ENCODE measurements at regions of chr9 and their contacts with region 1.

Region 1: GRCh38 chr9:89428901-89429890 is 68.7 kb downstream of the SEMA4D start:
- DNase-seq: peak; percentile 65
- H3K4me3 Mint-ChIP-seq: no peak overlapping the region
- H3K27ac Mint-ChIP-seq: peak overlapping the region; percentile 83
- H3K4me1 Mint-ChIP-seq: peaks cover 89% of the 10 kb centered on the region
- H3K27me3 Mint-ChIP-seq: no peaks in the 10 kb centered on the region

Region 2: GRCh38 chr9:89410641-89411350 is 18.4 kb before region 1 on chr9:
- CTCF ChIA-PET with region 1: interaction called, 31 read pairs
- POLR2A ChIA-PET with region 1: no interaction called
- DNase-seq: no peak
- H3K4me3 Mint-ChIP-seq: peak overlapping the region; percentile 55
- H3K27ac Mint-ChIP-seq: peak overlapping the region; percentile 87
- H3K4me1 Mint-ChIP-seq: peaks cover 91% of the 10 kb centered on the region
- H3K27me3 Mint-ChIP-seq: no peaks in the 10 kb centered on the region

Region 3: DNA sequence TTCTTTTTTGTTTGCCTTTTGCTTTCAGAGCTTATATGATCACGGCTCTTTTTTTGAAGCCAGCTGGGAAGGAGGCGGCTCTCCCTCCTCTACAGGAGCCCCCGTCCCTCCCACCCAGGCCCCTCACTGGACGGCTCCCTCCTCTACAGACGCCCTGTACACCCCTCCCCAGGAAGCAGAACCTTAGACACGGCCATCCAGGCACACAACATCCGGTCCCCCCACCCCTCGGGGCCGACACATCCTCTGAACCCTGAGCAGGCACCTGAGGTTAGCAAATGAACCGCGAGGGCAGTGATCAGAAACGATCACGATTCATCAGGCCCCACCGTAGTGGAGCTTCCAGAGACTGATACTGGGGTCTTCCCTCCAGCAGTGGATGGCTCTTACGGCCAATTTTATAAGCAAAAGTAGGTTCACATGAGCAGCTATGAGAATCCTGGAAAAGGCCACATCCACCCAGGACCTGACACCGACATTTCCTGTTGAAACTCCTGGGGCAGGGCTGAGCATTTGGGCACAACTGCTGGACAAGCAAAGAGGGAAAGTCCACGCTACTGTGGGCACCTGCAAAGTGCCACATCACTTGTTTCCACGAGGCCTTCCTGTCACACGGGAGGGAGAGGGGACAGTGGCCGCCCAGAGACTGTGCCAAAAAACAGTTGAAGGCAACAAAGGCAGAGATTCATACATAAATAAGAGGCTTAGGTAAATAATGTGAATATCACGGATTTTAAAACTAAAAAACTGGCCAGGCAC is 10.1 kb before region 1 on chr9:
- CTCF ChIA-PET with region 1: interaction called, 29 read pairs
- POLR2A ChIA-PET with region 1: no interaction called
- DNase-seq: peak; percentile 83
- H3K4me3 Mint-ChIP-seq: peak overlapping the region; percentile 75
- H3K27ac Mint-ChIP-seq: peak overlapping the region; percentile 90
- H3K4me1 Mint-ChIP-seq: peaks cover 89% of the 10 kb centered on the region
- H3K27me3 Mint-ChIP-seq: no peaks in the 10 kb centered on the region

Region 4: DNA sequence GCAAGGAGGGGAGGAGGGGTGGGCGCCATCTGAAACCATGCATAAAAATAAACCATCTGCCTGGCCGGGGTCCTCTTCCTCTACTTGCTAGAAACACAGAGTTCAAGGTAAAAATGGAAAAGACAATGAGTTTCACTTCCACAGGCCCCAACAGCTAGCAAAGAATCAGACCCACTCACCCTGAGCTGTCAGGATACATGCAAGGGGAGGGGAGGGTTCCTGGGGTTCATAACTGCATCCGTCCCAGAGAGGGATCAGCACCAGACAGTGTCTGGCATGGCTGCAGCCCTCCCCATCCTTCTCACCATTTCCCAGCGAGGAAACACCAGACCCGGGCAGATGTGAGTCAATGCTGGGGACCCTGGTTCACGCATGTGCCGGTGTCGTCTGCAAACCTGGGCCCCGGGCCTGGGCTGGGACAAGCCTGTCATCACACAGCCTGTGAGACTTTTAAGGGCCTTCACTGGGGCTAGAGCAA is 13.3 kb after region 1 on chr9:
- CTCF ChIA-PET with region 1: interaction called, 23 read pairs
- POLR2A ChIA-PET with region 1: no interaction called
- DNase-seq: no peak
- H3K4me3 Mint-ChIP-seq: no peak overlapping the region
- H3K27ac Mint-ChIP-seq: peak overlapping the region; percentile 86
- H3K4me1 Mint-ChIP-seq: peaks cover 93% of the 10 kb centered on the region
- H3K27me3 Mint-ChIP-seq: no peaks in the 10 kb centered on the region

Region 5: GRCh38 chr9:89821104-89821480 is 391.9 kb after region 1 on chr9:
- CTCF ChIA-PET with region 1: no interaction called
- POLR2A ChIA-PET with region 1: no interaction called
- DNase-seq: no peak
- H3K4me3 Mint-ChIP-seq: no peak overlapping the region
- H3K27ac Mint-ChIP-seq: no peak overlapping the region
- H3K4me1 Mint-ChIP-seq: peaks cover 3% of the 10 kb centered on the region
- H3K27me3 Mint-ChIP-seq: peaks cover 10% of the 10 kb centered on the region